Caco-2 (cell line): ENCODE measurements at regions of chr11 and their contacts with region 1.

Region 1: DNA sequence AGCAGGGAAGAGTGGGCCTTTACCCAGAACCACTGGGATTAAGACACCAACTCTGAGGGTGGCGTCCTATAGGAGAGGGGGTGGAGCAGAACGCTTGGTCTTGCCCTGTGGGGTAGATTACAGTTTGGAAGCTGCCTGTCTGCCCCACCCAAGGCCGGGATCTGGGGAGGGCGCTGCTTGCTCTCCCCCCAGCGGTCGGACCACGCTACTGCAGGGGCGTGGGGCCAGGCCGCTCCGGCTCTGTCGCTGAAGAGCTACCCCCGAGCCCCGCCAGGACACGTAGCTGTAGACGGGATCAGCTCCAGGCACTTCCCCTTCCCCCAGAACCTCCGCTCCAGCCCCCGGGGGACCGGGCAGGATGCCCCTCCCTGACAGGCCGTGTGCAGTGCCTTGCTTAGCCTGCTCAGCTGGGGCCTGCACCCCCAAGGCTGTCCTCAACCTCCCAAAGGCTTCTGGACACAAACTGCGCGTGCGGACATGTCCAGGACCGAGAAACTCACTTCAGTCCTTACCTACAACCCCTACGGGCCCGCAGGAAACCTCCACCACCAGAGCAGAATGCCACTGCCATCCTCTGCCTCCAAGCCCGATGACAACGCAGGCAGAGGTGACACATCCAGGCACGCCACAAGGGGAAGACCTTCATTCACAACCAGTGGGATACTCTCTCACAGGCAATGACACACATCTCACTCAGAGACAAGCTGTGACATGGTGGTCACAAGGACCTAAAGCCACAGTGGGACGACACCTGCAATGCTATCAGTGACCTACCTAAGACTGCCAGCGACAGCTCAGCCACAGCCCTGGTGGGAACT is 3.6 kb downstream of the AHNAK start:
- DNase-seq: peak; percentile 73 to 88
- H3K4me3 ChIP-seq: peak overlapping the region; percentile 11
- H3K4me3 Mint-ChIP-seq: peak overlapping the region; percentile 100
- H3K27ac Mint-ChIP-seq: peak overlapping the region; percentile 97
- H3K4me1 ChIP-seq: peaks cover 58% of the 10 kb centered on the region
- H3K4me1 Mint-ChIP-seq: peaks cover 40% of the 10 kb centered on the region
- H3K27me3 ChIP-seq: no peaks in the 10 kb centered on the region
- H3K27me3 Mint-ChIP-seq: no peaks in the 10 kb centered on the region
- CTCF ChIP-seq: peak; percentile 97 to 98

Region 2: DNA sequence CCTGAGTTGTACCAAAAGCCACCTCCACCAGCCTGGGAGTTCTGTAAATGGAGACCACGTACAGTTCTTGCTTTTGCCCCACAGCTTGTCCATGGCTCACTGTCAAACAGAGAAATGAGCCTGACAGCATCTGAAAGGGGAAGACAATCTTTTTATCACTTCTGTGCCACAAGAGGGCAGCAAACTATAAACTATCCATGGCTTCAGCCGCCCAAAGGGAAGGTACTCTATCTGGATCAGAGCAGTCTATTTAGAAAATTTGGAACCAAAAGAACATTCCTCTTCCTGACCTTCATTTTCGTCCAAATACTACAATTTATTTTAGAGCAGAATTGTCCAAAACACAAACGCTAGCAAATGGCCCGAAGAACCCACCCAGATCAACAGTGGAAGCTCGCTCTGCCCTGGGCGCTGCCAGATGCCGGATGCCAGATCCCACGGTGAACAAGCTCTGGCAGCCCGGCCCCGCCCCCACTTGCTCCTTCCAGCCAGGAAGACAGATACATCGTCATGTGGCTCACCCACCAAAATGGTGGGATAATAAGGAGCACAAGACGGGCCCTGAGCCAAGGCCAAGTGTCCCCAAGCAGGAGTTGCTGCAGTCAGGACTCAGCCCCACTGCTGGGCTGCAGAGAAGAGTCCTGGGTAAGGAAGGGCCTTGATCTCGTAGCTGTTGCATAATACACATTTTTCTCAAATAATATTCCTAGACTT is 148.0 kb before region 1 on chr11:
- CTCF ChIA-PET with region 1: interaction called, 79 read pairs
- POLR2A ChIA-PET with region 1: no interaction called
- intact Hi-C with region 1: loop called (anchors 1 kb)
- DNase-seq: peak; percentile 72 to 80
- H3K4me3 ChIP-seq: no peak overlapping the region
- H3K4me3 Mint-ChIP-seq: no peak overlapping the region
- H3K27ac Mint-ChIP-seq: peak overlapping the region; percentile 38
- H3K4me1 ChIP-seq: peaks cover 65% of the 10 kb centered on the region
- H3K4me1 Mint-ChIP-seq: peaks cover 32% of the 10 kb centered on the region
- H3K27me3 ChIP-seq: no peaks in the 10 kb centered on the region
- H3K27me3 Mint-ChIP-seq: no peaks in the 10 kb centered on the region
- CTCF ChIP-seq: peak; percentile 66 to 74

Region 3: DNA sequence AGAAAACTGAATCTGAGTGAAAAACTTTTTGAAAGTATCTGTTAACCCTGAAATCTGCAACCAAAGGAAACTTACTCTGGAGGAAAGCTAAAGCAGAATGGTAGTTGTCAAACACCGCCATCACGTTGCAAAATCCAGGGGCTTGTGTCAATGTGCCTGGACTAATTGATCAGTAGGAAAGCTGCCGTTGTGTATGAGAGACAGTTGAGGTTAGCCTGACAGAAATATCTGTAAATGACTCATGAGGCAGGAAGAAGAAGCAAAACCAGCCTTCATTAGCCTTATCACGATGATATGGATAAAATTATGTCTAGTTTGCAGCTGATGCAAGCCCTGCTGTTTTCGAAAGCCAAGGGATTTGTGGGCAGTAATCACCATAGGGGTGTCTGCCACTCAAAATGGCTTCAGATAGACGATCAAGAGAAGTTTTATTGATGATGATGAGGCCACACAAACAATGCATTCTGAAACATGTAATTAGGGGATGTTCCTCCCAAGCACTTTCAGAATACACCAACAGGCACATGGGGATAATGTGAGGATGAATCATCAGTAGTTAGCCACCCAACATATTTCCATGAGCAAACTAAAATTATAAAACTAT is 115.2 kb before region 1 on chr11:
- CTCF ChIA-PET with region 1: interaction called, 56 read pairs
- POLR2A ChIA-PET with region 1: interaction called, 5 read pairs
- intact Hi-C with region 1: loop called (anchors 1 kb)
- DNase-seq: no peak
- H3K4me3 ChIP-seq: no peak overlapping the region
- H3K4me3 Mint-ChIP-seq: no peak overlapping the region
- H3K27ac Mint-ChIP-seq: peak overlapping the region; percentile 91
- H3K4me1 ChIP-seq: peaks cover 75% of the 10 kb centered on the region
- H3K4me1 Mint-ChIP-seq: peaks cover 46% of the 10 kb centered on the region
- H3K27me3 ChIP-seq: no peaks in the 10 kb centered on the region
- H3K27me3 Mint-ChIP-seq: no peaks in the 10 kb centered on the region
- CTCF ChIP-seq: no peak

Region 4: DNA sequence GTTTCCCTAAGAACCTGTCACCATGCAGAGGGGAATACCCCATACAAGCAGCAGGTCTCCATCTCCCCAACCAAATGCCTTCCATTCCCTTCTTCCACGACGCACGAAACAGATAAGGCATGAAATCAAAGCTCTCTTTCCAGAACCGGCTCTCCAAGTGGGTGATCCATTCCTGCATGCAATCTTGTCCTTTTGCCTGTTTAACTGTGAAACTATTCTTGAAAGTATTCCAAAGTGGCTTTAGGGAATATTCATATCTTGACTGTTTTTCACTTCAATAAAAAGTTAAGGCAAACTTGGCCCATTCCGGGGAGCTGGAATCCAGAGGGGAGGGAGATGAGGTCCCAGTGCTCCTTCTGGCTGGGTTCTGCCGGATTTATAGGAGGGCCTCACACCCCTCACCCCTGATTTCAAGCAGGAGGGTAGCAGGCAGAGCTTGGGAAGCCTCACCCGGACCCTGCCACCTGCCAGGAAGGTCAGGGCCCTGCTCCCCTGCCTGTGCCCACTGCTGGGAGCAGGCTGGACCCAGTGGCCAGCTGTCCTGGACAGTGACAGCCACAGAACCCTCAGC is 63.2 kb before region 1 on chr11:
- CTCF ChIA-PET with region 1: interaction called, 14 read pairs
- POLR2A ChIA-PET with region 1: interaction called, 15 read pairs
- intact Hi-C with region 1: no loop called
- DNase-seq: no peak
- H3K4me3 ChIP-seq: no peak overlapping the region
- H3K4me3 Mint-ChIP-seq: peak overlapping the region; percentile 43
- H3K27ac Mint-ChIP-seq: peak overlapping the region; percentile 92
- H3K4me1 ChIP-seq: peaks cover 62% of the 10 kb centered on the region
- H3K4me1 Mint-ChIP-seq: peaks cover 40% of the 10 kb centered on the region
- H3K27me3 ChIP-seq: no peaks in the 10 kb centered on the region
- H3K27me3 Mint-ChIP-seq: no peaks in the 10 kb centered on the region
- CTCF ChIP-seq: no peak

Region 5: GRCh38 chr11:62508268-62509058 is 34.5 kb before region 1 on chr11:
- CTCF ChIA-PET with region 1: interaction called, 18 read pairs
- POLR2A ChIA-PET with region 1: interaction called, 4 read pairs
- intact Hi-C with region 1: loop called (anchors 2 kb)
- DNase-seq: peak; percentile 79 to 83
- H3K4me3 ChIP-seq: 0 out of 2 replicates have a peak overlapping the region, but pooled peaks have one; percentile 5
- H3K4me3 Mint-ChIP-seq: peak overlapping the region; percentile 58
- H3K27ac Mint-ChIP-seq: peak overlapping the region; percentile 85
- H3K4me1 ChIP-seq: peaks cover 56% of the 10 kb centered on the region
- H3K4me1 Mint-ChIP-seq: peaks cover 36% of the 10 kb centered on the region
- H3K27me3 ChIP-seq: no peaks in the 10 kb centered on the region
- H3K27me3 Mint-ChIP-seq: no peaks in the 10 kb centered on the region
- CTCF ChIP-seq: peak; percentile 41 to 74

Region 6: GRCh38 chr11:62573592-62574362 is 30.8 kb after region 1 on chr11 and contains the start of gene EEF1G:
- CTCF ChIA-PET with region 1: interaction called, 17 read pairs
- POLR2A ChIA-PET with region 1: interaction called, 7 read pairs
- intact Hi-C with region 1: no loop called
- DNase-seq: peak; percentile 100
- H3K4me3 ChIP-seq: peak within 1 kb of the TSS; percentile 62
- H3K4me3 Mint-ChIP-seq: peak within 1 kb of the TSS; percentile 97
- H3K27ac Mint-ChIP-seq: peak within 1 kb of the TSS; percentile 100
- H3K4me1 ChIP-seq: peaks cover 25% of the 10 kb centered on the region
- H3K4me1 Mint-ChIP-seq: peaks cover 56% of the 10 kb centered on the region
- H3K27me3 ChIP-seq: no peaks in the 10 kb centered on the region
- H3K27me3 Mint-ChIP-seq: no peaks in the 10 kb centered on the region
- CTCF ChIP-seq: no peak
- total RNA-seq, gene EEF1G: 2,004 and 2,035 TPM in 2 replicates